Ascending aorta (tissue), 2 donors: ENCODE measurements at regions of chr6 and their contacts with region 1.

Region 1: DNA sequence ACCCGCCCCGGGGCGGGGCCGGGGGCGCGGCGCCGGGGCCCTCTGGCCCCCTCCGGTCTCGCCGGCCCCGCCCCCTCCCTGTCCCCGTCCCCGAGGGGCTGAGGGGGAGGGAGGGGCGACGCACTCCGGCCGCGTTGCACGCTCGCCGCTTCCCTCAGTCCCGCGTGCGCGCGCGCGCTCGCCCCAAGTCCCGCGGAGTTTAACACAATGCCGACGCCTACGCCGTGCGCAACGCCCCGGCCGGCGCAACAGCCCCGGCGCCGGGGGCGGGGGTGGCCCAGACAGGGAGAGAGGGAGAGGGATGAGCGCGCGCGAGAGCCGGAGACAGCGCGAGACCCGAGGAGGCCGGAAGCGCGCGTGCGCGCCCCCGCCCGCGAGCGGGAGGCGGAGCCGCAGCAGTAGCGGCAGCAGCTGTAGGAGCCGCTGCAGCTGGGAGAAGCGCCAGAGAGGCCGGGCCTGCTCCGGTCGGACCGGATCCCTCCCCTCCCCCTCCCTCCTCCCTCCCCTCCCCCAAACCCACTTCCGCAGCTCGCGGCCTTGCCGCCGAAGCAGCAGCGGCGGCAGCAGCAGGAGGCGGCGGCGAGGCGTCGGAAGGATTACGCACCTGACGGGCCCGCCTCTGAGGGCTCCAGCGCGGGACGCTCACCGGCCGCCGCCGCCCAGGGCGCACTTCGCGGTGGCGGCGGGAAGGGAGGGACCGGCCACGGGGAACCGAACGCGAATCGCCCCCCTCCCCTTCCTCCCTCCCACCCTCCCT is 905 bp downstream of the ZBTB2 start:
- DNase-seq: peak; percentile 93 to 99
- H3K4me3 ChIP-seq: peak overlapping the region; percentile 76 to 98
- H3K27ac ChIP-seq: peak overlapping the region; percentile 98 to 100
- H3K4me1 ChIP-seq: peaks cover 5 to 26% of the 10 kb centered on the region in 2 donors
- H3K27me3 ChIP-seq: no peaks in the 10 kb centered on the region
- CTCF ChIP-seq: no peak

Region 2: GRCh38 chr6:151205721-151206600 is 184.5 kb before region 1 on chr6:
- intact Hi-C with region 1: no loop called
- DNase-seq: no peak
- H3K4me3 ChIP-seq: no peak overlapping the region
- H3K27ac ChIP-seq: no peak overlapping the region
- H3K4me1 ChIP-seq: no peaks in the 10 kb centered on the region
- H3K27me3 ChIP-seq: no peaks in the 10 kb centered on the region
- CTCF ChIP-seq: no peak

Region 3: GRCh38 chr6:151317103-151317994 is 73.1 kb before region 1 on chr6:
- intact Hi-C with region 1: no loop called
- DNase-seq: no peak
- H3K4me3 ChIP-seq: no peak overlapping the region
- H3K27ac ChIP-seq: no peak overlapping the region
- H3K4me1 ChIP-seq: no peaks in the 10 kb centered on the region
- H3K27me3 ChIP-seq: no peaks in the 10 kb centered on the region
- CTCF ChIP-seq: no peak

Region 4: GRCh38 chr6:151436802-151437201 is 46.3 kb after region 1 on chr6:
- intact Hi-C with region 1: loop called (anchors 5 kb)
- DNase-seq: no peak
- H3K4me3 ChIP-seq: no peak overlapping the region
- H3K27ac ChIP-seq: peak overlapping the region; percentile 66 to 72
- H3K4me1 ChIP-seq: peaks cover 8 to 29% of the 10 kb centered on the region in 2 donors
- H3K27me3 ChIP-seq: no peaks in the 10 kb centered on the region
- CTCF ChIP-seq: no peak

Region 5: GRCh38 chr6:151451950-151452749 is 61.7 kb after region 1 on chr6 and contains the start of gene RMND1:
- intact Hi-C with region 1: loop called (anchors 1 kb)
- DNase-seq: peak; percentile 99 to 100
- H3K4me3 ChIP-seq: peak within 1 kb of the TSS; percentile 86
- H3K27ac ChIP-seq: peak within 1 kb of the TSS; percentile 96
- H3K4me1 ChIP-seq: peaks cover 0 to 8% of the 10 kb centered on the region in 2 donors
- H3K27me3 ChIP-seq: no peaks in the 10 kb centered on the region
- CTCF ChIP-seq: no peak
- total RNA-seq, gene RMND1: 3.8 TPM

Region 6: DNA sequence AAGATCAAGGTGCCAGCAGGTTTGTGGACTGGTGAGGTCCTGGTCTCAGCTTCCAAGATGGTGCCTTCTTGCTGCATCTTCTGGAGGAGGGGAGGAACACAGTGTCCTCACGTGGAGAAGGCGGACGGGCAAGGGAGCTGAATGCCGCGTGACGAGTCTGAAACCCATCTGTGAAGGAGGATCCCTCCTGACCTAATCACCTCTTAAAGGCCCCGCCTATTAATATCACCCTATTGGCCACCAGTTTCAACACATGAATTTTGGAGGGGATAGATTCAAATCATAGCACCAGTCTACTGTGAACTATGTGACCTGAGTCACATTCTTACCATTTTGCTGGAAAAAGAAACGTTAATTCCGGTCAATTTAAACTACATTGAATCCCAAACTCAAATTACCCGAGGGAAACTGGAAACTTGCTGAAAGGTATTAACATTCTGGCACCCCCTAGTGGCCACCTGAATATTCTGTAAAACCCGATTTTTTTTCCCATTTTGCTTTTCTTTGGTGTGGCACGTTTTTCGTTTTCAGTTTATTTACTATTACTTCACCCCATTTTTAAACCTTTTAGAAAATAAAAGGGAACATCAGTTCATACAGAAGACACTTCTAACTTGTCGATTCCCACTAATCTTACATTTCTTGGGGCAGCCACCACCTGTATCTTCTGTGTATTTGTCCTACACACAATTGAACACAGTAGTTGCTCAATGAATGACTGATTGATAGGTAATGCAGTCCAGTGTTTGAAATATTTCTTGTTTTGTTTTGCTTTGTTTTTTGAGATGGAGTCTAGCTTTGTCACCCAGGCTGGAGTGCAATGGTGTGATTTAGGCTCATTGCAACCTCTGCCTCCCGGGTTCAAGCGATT is 85.4 kb after region 1 on chr6:
- intact Hi-C with region 1: loop called (anchors 5 kb)
- DNase-seq: no peak
- H3K4me3 ChIP-seq: peak overlapping the region in 1 of 2 donors; percentile 9
- H3K27ac ChIP-seq: no peak overlapping the region
- H3K4me1 ChIP-seq: peaks cover 0 to 3% of the 10 kb centered on the region in 2 donors
- H3K27me3 ChIP-seq: no peaks in the 10 kb centered on the region
- CTCF ChIP-seq: peak; percentile 59 to 83 (median 67)